Sciatic nerve (tissue), 2 donors: ENCODE measurements at regions of chr12 and their contacts with region 1.

Region 1: GRCh38 chr12:1804545-1805332 is 15.6 kb upstream of the LRTM2 start:
- DNase-seq: peak; percentile 94
- ATAC-seq: peak; percentile 95

Region 2: DNA sequence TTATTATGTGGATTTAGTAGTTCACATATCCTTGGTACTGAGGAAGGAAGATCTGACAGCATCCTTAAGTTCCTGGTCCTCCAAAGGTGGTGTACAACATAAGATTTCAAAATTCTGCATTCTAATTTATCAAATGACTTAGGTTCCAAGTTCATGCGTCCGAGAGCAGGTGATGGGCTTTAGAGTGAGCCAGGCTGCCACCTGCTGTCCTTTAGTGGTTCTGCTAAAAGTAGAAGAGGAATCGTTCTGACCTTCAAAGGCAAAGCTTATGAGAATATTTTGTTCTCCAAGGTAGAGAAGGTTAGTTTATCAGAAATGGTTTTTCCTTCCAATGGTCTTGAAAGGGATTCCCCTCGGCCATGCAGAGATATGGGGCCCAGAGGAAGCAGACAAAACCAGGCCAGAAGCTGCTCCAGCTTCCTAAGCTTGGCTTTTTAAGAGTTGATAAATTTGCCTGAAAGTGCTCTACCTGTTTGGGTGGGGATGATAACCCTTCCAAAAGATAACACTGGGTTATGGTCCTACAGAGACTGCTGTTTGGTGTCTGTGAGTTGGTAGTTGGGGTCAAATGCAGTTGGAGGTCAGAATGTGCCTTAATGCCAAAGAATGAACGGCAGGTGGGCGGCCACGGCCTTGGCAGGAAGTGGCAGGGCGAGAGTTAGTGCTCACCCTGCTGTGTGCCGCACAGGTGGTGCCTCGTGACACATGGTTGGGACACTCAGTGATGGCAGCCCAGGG is 13.5 kb before region 1 on chr12:
- intact Hi-C with region 1: no loop called
- DNase-seq: peak; percentile 78
- ATAC-seq: peak; percentile 53

Region 3: DNA sequence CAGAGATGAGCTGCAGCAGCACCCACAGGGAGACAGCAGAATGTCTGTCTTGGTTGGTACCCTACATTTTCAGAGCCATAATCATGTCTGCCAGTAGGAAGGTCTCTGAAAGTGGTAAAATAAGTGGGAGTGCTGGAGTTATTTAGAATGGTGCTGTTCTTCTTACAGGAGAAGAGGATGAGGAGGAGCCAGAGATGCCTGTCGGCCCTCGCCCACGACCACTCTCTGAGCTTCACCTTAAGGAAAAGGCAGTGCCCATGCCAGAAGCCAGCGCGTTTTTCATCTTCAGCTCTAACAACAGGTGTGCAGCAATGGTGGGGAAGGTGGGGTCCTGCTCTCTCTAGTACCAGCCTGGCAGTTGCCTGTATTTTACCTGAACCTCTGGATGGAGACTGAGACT is 788.3 kb after region 1 on chr12:
- intact Hi-C with region 1: loop called (anchors 10 kb)
- DNase-seq: no peak
- ATAC-seq: no peak